Dorsolateral prefrontal cortex (tissue), 120 donors: ENCODE measurements at regions of chr2 and their contacts with region 1.

Region 1: DNA sequence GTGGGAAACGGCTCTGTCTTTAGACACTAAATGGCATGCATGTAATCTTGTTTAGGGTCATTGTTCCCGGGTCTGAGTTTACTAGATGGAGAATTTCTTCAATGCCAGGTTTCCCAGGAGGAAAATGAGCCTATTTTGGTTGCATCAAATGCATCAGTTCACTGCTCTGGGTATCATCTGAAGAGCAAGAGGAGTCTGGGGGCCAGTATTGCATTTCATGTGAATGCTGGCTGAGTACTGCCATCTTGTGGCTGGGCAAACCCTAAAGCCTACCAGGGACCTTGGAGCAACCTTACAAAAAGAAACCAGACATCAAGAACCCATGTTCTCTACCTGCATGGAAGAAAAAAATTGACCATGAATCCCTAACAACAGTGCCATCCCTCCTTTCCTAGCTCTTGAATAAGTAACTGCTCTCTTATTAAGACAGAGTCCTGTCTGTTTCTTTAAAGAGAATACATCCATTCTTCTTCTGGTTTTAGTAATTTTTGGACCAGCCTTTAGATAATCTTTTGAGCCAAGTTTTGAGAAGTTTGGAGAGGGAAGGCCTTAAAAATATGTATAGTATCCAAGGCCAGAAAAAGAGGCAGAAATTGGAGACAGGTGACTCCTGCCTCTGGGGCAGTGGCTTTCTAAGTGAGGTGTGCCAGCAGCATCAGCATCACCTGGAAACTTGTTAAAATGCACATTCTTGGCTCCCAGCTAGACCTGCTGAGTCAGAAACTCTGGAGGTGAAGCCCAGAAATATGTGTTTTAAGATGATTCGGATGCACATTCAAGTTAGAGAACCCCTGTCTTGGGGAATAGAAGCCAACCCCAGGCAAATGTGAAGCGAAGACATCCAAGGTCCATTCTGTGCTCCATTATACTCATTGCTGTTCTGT is 261.0 kb upstream of the CXCR4 start:
- DNase-seq: peak in 5 of 10 donors; percentile 41 to 71 (median 63)
- H3K4me3 ChIP-seq: peak overlapping the region in 1 of 59 donors; percentile 12
- H3K27ac ChIP-seq: no peak overlapping the region
- H3K27me3 ChIP-seq: no peaks in the 10 kb centered on the region
- CTCF ChIP-seq: peak; percentile 41 to 91 (median 78)

Region 2: GRCh38 chr2:135913727-135914365 is 465.1 kb before region 1 on chr2:
- intact Hi-C with region 1: loop called (anchors 1 to 2 kb)
- DNase-seq: peak in 1 of 10 donors; percentile 10
- H3K4me3 ChIP-seq: no peak overlapping the region
- H3K27ac ChIP-seq: no peak overlapping the region
- H3K27me3 ChIP-seq: no peaks in the 10 kb centered on the region
- CTCF ChIP-seq: peak; percentile 71 to 94 (median 84)

Region 3: DNA sequence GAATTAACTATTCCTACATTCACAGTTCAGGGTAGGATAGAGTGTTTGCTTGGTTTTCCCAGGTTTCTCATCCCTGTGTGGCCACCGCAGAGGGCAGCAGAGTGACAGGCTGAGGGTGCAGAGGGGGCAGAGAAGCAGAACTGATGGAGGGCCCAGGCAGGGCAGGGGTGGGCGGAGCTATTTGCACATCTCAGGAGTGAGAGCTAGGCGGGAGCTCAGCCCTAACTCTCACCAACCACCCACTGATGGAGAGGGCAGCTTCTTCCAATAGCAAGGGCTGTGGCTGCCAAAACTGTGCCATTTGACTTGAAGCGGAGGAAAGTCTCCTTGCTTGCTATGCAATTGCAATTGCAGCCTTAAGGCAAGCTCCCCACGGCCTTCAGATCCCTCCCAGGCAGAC is 381.6 kb before region 1 on chr2:
- intact Hi-C with region 1: loop called (anchors 10 kb)
- DNase-seq: peak in 7 of 10 donors; percentile 34 to 54 (median 49)
- H3K4me3 ChIP-seq: no peak overlapping the region
- H3K27ac ChIP-seq: peak overlapping the region in 3 of 59 donors; percentile 8 to 40 (median 19)
- H3K27me3 ChIP-seq: no peaks in the 10 kb centered on the region
- CTCF ChIP-seq: peak in 39 of 56 donors; percentile 10 to 55 (median 34)

Region 4: GRCh38 chr2:136246086-136246669 is 132.8 kb before region 1 on chr2:
- intact Hi-C with region 1: loop called in 1 of 2 experiments (anchors 10 kb)
- DNase-seq: no peak
- H3K4me3 ChIP-seq: peak overlapping the region in 1 of 59 donors; percentile 42
- H3K27ac ChIP-seq: peak overlapping the region in 1 of 59 donors; percentile 15
- H3K27me3 ChIP-seq: no peaks in the 10 kb centered on the region
- CTCF ChIP-seq: no peak